ENCODE measurements at regions of chr10 and their contacts with region 1.

Region 1: DNA sequence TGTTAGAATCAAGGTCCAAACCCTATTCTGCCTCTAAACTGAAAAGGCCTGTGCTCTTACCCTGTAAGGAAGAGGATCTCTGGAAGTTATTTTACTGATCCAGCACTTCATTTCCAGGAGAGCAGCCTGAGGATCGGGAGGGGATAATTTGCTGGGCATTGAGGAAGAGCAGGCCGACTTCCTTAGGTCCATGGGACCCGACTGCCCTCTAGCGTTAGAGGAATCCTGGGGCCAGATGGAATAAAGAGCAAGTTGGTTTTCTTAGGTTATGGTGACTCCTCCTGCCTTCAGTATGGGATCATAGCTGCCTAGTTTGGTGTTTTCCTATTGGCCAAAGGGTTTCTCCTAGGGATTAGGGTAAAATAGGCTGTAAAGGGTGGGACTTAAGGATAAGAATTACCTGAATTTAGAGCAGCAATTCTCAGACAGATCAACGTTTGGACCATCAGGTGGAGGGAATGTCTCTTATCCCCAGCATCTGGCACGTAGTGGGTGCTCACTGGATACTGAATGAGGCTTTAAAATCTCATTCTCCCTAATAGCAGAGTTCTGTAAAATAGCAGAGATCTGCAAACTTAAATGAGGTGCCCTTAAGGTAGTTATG is 40.0 kb upstream of the SORBS1 start:
- DNase-seq: peak; percentile 47 to 86 (median 74)
- H3K4me3 ChIP-seq: no peak overlapping the region
- H3K27ac ChIP-seq: peak overlapping the region in 1 of 59 donors; percentile 5
- H3K27me3 ChIP-seq: peaks cover 0 to 8% (median 0%) of the 10 kb centered on the region in 45 donors
- CTCF ChIP-seq: peak; percentile 82 to 99 (median 95)

Region 2: DNA sequence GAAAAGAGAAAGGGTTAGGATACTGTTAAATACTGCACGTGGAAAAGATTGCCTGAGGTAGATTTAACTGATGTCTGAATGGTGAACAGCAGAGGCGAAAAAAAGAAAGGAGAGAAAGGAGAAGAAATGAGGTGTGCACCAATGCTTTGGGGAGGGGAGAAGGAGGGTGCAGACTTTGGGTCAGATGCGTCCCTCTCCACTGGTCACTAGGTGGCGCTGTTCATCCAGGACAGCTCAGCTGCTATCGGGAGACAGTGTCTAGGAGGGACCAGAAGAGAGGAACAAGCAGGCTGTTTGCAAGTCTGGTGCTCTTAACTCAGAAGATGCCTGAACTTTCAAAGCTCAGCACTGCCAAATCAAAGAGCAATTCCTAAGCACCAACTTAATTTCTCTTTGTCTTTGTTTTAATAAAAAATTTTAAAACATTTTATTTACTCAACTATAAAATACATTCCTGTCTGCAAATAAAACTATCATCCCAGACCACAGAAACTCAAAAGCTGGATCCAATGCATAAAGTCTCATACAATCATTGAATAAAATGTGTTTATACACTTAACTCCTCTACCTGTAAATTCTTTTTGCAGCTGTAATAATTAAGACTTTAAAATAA is 226.5 kb before region 1 on chr10:
- intact Hi-C with region 1: loop called (anchors 1 to 5 kb)
- DNase-seq: peak; percentile 62 to 89 (median 80)
- H3K4me3 ChIP-seq: no peak overlapping the region
- H3K27ac ChIP-seq: peak overlapping the region in 36 of 59 donors; percentile 1 to 84 (median 44)
- H3K27me3 ChIP-seq: no peaks in the 10 kb centered on the region
- CTCF ChIP-seq: peak; percentile 81 to 99 (median 96)

Region 3: GRCh38 chr10:95430231-95430951 is 170.8 kb before region 1 on chr10:
- intact Hi-C with region 1: loop called (anchors 1 to 5 kb)
- DNase-seq: peak in 1 of 10 donors; percentile 67
- H3K4me3 ChIP-seq: no peak overlapping the region
- H3K27ac ChIP-seq: peak overlapping the region in 42 of 59 donors; percentile 1 to 87 (median 60)
- H3K27me3 ChIP-seq: peaks cover 0 to 7% (median 0%) of the 10 kb centered on the region in 45 donors
- CTCF ChIP-seq: peak; percentile 89 to 99 (median 96)

Region 4: GRCh38 chr10:95536017-95536416 is 65.2 kb before region 1 on chr10:
- intact Hi-C with region 1: no loop called
- DNase-seq: no peak
- H3K4me3 ChIP-seq: peak overlapping the region in 2 of 59 donors; percentile 2 to 6
- H3K27ac ChIP-seq: peak overlapping the region in 49 of 59 donors; percentile 4 to 84 (median 57)
- H3K27me3 ChIP-seq: no peaks in the 10 kb centered on the region
- CTCF ChIP-seq: no peak